Activated CD4-positive, alpha-beta T cell treated with anti-CD3 and anti-CD28 coated beads for 36 hours (primary cell): ENCODE measurements at regions of chr18 and their contacts with region 1.

Region 1: DNA sequence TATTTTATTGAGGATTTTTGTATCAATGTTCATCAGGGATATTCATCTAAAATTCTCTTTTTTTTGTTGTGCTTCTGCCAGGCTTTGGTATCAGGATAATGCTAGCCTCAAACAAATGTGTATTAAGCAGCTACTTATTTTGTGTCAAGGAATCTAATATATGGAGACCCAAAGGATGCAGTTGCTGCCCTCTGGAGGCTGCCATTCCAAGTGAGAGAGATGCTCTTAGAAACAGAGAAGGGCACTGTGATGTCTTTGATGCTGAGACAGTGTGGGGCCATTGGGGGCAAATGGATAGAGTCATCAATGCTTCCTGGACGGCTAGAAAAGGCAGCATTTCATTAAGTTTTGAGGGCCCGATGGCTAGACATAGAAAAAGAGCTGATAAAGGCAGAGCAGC is 292.6 kb downstream of the SETBP1 start:
- DNase-seq: peak; percentile 23
- ATAC-seq: no peak
- H3K4me3 Mint-ChIP-seq: no peak overlapping the region
- H3K27ac Mint-ChIP-seq: peak overlapping the region; percentile 56
- H3K4me1 Mint-ChIP-seq: no peaks in the 10 kb centered on the region
- H3K27me3 Mint-ChIP-seq: peaks cover 2% of the 10 kb centered on the region

Region 2: DNA sequence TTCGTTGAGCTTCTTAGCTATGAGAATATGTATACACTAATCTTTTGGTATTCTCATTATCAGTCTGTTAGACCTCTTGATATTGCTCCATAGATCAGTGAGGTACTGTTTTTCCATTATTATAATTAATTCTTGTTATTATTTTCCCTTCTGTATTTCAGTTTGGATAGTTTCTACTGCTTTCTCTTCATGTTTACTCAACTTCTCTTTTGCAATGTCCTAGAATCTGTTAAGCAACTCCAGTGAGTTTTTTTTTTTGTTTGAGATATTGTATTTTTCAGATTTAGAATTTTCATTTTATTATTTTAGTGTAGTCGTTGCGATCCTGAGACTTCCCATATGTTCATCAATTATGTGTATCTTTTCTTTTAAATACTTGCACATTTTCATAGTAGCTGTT is 31.8 kb before region 1 on chr18:
- CTCF ChIA-PET with region 1: no interaction called
- POLR2A ChIA-PET with region 1: no interaction called
- intact Hi-C with region 1: loop called in 1 of 2 experiments (anchors 1 kb)
- DNase-seq: no peak
- ATAC-seq: no peak
- H3K4me3 Mint-ChIP-seq: no peak overlapping the region
- H3K27ac Mint-ChIP-seq: no peak overlapping the region
- H3K4me1 Mint-ChIP-seq: no peaks in the 10 kb centered on the region
- H3K27me3 Mint-ChIP-seq: peaks cover 7% of the 10 kb centered on the region